Activated CD4-positive, alpha-beta T cell treated with anti-CD3 and anti-CD28 coated beads for 36 hours (primary cell): ENCODE measurements at regions of chr1 and their contacts with region 1.

Region 1: DNA sequence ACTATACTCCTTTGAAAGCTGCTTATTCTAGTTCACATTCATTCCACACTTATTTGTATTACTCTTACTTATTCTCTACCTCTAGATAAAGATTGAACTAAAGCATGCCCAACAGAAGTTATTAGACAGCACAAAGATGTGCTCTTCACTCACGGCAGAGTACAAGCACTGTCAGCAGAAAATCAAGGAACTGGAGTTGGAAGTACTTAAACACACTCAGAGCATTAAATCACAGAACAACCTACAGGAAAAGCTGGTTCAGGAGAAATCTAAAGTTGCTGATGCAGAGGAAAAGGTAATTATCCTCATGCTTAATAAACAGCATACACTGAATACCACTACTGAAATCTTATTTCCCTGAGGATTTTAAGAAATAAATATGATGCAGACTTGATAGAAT is 81.3 kb upstream of the PPIH start:
- DNase-seq: no peak
- ATAC-seq: no peak
- H3K4me3 Mint-ChIP-seq: no peak overlapping the region
- H3K27ac Mint-ChIP-seq: no peak overlapping the region
- H3K4me1 Mint-ChIP-seq: no peaks in the 10 kb centered on the region
- H3K27me3 Mint-ChIP-seq: no peaks in the 10 kb centered on the region

Region 2: GRCh38 chr1:42146626-42147320 is 430.2 kb before region 1 on chr1:
- CTCF ChIA-PET with region 1: no interaction called
- POLR2A ChIA-PET with region 1: no interaction called
- intact Hi-C with region 1: loop called in 1 of 2 experiments (anchors 10 kb)
- DNase-seq: peak; percentile 84
- ATAC-seq: peak; percentile 84
- H3K4me3 Mint-ChIP-seq: no peak overlapping the region
- H3K27ac Mint-ChIP-seq: no peak overlapping the region
- H3K4me1 Mint-ChIP-seq: peaks cover 7% of the 10 kb centered on the region
- H3K27me3 Mint-ChIP-seq: peaks cover 14% of the 10 kb centered on the region

Region 3: GRCh38 chr1:42639116-42639515 is 62.2 kb after region 1 on chr1:
- CTCF ChIA-PET with region 1: no interaction called
- POLR2A ChIA-PET with region 1: no interaction called
- intact Hi-C with region 1: no loop called
- DNase-seq: no peak
- ATAC-seq: no peak
- H3K4me3 Mint-ChIP-seq: no peak overlapping the region
- H3K27ac Mint-ChIP-seq: no peak overlapping the region
- H3K4me1 Mint-ChIP-seq: no peaks in the 10 kb centered on the region
- H3K27me3 Mint-ChIP-seq: no peaks in the 10 kb centered on the region

Region 4: GRCh38 chr1:42669936-42670335 is 93.0 kb after region 1 on chr1:
- CTCF ChIA-PET with region 1: no interaction called
- POLR2A ChIA-PET with region 1: no interaction called
- intact Hi-C with region 1: no loop called
- DNase-seq: no peak
- ATAC-seq: no peak
- H3K4me3 Mint-ChIP-seq: no peak overlapping the region
- H3K27ac Mint-ChIP-seq: no peak overlapping the region
- H3K4me1 Mint-ChIP-seq: no peaks in the 10 kb centered on the region
- H3K27me3 Mint-ChIP-seq: no peaks in the 10 kb centered on the region

Region 5: DNA sequence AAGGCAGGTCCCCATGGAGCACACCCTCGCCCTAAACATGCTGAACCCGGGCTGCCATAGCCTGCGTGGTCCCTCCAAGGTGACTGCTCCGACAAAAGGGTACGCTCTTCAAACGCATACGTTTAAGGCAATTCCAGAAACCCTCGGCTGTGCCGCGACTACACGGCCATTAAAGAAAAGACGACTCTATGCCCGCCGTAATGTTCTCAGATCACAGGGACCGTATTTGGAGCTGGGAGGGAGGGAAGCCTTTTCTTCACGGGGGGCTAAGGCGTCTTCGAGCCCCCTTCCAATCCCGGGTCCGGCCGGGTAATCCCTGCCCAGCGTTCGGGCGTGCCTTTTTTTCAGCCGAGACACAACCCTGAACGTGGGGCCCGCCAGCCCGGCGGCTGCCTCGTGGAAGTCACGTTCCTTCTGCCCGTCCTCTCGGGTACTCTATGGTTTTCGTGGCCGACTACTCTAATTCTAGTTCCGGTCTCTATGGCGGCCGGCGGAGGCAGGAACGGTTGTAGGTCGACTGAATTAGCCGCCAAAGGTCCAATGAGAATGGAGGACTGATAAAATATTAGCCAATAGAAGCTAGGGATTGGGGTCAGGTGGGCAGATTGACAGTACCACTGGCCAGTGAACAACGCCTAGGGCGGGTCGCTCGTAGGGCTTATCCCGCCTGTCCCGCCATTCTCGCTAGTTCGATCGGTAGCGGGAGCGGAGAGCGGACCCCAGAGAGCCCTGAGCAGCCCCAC is 105.0 kb after region 1 on chr1 and contains the start of gene YBX1:
- CTCF ChIA-PET with region 1: interaction called, 3 read pairs
- POLR2A ChIA-PET with region 1: no interaction called
- intact Hi-C with region 1: loop called in 1 of 2 experiments (anchors 2 kb)
- DNase-seq: peak; percentile 96
- ATAC-seq: peak; percentile 97
- H3K4me3 Mint-ChIP-seq: peak within 1 kb of the TSS; percentile 93
- H3K27ac Mint-ChIP-seq: peak within 1 kb of the TSS; percentile 97
- H3K4me1 Mint-ChIP-seq: peaks cover 41% of the 10 kb centered on the region
- H3K27me3 Mint-ChIP-seq: no peaks in the 10 kb centered on the region
- total RNA-seq, gene YBX1: 1,224 to 1,435 TPM

Region 6: GRCh38 chr1:42730988-42731387 is 154.1 kb after region 1 on chr1:
- CTCF ChIA-PET with region 1: interaction called, 4 read pairs
- POLR2A ChIA-PET with region 1: no interaction called
- intact Hi-C with region 1: loop called (anchors 1 kb)
- DNase-seq: peak; percentile 83
- ATAC-seq: peak; percentile 87
- H3K4me3 Mint-ChIP-seq: no peak overlapping the region
- H3K27ac Mint-ChIP-seq: no peak overlapping the region
- H3K4me1 Mint-ChIP-seq: peaks cover 3% of the 10 kb centered on the region
- H3K27me3 Mint-ChIP-seq: no peaks in the 10 kb centered on the region

Region 7: GRCh38 chr1:42747125-42747524 is 170.2 kb after region 1 on chr1:
- CTCF ChIA-PET with region 1: interaction called, 6 read pairs
- POLR2A ChIA-PET with region 1: no interaction called
- intact Hi-C with region 1: loop called (anchors 1 to 5 kb)
- DNase-seq: peak; percentile 67
- ATAC-seq: peak; percentile 39
- H3K4me3 Mint-ChIP-seq: no peak overlapping the region
- H3K27ac Mint-ChIP-seq: no peak overlapping the region
- H3K4me1 Mint-ChIP-seq: no peaks in the 10 kb centered on the region
- H3K27me3 Mint-ChIP-seq: no peaks in the 10 kb centered on the region